ENCODE measurements at regions of chr2 and their contacts with region 1.

Region 1: DNA sequence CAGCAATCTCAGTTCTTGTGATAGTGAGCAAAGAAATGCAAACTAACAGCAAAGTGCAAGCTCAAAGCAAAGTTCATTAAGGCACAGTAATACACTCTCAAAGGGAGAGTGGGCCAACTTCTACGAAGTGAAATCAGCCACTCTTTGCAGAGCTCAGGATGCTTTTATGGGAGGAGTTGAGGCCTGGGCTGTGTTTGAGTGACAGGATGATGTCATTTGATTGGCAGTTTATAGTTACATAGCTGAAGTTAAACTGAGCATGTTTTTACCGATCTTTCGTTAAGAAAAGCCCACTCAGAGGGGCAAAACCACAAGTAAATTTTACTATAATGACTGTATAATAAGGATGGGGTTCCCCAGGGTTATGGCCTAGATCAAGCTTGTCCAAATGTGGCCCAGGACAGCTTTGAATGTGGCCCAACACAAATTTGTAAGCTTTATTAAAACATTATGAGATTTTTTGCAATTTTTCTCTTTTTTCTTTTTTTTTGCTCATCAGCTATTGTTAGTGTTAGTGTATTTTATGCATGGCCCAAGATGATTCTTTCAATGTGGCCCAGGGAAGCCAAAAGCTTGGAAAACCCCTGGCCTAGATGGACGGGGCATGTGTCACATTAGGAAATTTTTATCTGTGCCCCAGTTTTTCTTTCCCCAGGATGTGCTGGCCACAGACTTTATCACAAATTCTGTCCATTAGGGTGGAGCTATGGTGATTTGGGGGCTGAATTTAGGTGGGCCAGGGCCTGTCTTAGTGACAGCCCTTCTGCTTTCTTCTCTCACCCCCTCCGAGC is 8.3 kb upstream of the DNAH7 start:
- DNase-seq: peak; percentile 18
- ATAC-seq: peak; percentile 56
- H3K4me3 Mint-ChIP-seq: no peak overlapping the region
- H3K27ac Mint-ChIP-seq: no peak overlapping the region
- H3K4me1 Mint-ChIP-seq: peaks cover 29% of the 10 kb centered on the region
- H3K27me3 Mint-ChIP-seq: no peaks in the 10 kb centered on the region
- CTCF ChIP-seq: no peak

Region 2: GRCh38 chr2:196131384-196131937 is 54.5 kb after region 1 on chr2:
- CTCF ChIA-PET with region 1: interaction called, 10 read pairs
- POLR2A ChIA-PET with region 1: interaction called, 4 read pairs
- intact Hi-C with region 1: loop called (anchors 5 kb)
- DNase-seq: peak; percentile 83
- ATAC-seq: peak; percentile 51
- H3K4me3 Mint-ChIP-seq: no peak overlapping the region
- H3K27ac Mint-ChIP-seq: peak overlapping the region; percentile 79
- H3K4me1 Mint-ChIP-seq: peaks cover 13% of the 10 kb centered on the region
- H3K27me3 Mint-ChIP-seq: no peaks in the 10 kb centered on the region
- CTCF ChIP-seq: peak; percentile 72

Region 3: DNA sequence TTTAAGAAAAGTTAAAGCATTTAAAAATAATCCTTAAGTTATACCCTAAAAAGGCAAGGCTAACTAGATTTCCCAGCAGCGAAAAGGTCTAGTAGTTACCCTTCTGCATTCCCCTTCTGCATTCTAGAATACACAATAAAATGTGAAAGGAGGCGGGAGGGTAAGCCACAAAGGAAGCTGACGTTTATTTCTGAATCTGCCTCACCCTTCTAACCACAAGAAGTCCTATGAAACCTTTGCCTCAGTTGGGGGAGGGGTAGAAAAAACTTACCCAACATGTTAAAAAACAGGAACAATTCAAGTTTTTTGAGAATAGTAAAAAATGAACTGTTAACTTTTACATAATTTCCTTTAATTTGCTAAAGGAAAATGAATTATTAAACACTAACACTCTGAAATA is 83.1 kb after region 1 on chr2:
- CTCF ChIA-PET with region 1: interaction called, 11 read pairs
- POLR2A ChIA-PET with region 1: interaction called, 3 read pairs
- intact Hi-C with region 1: no loop called
- DNase-seq: peak; percentile 84
- ATAC-seq: peak; percentile 40
- H3K4me3 Mint-ChIP-seq: peak overlapping the region; percentile 99
- H3K27ac Mint-ChIP-seq: peak overlapping the region; percentile 83
- H3K4me1 Mint-ChIP-seq: peaks cover 49% of the 10 kb centered on the region
- H3K27me3 Mint-ChIP-seq: no peaks in the 10 kb centered on the region
- CTCF ChIP-seq: no peak

Region 4: DNA sequence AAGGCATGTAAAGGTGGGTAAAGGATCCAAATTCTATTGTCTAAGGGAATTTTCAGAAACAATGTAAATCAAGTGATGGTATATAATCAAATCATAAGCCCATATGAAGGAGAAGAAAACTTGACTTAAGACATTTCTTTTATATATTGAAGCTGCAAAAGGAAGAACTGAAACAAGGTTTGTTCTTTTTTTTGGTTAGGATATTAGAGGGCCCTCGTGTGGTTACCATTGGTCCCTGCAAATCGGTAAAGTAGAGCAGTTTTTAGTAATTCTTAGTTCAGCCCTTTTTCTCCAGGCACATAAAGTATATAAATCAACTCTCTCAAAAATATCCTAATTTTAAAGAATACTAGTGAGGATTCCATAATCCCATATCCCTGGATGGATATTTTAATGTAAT is 200.0 kb after region 1 on chr2:
- CTCF ChIA-PET with region 1: interaction called, 24 read pairs
- POLR2A ChIA-PET with region 1: no interaction called
- intact Hi-C with region 1: loop called (anchors 2 kb)
- DNase-seq: peak; percentile 60
- ATAC-seq: peak; percentile 18
- H3K4me3 Mint-ChIP-seq: no peak overlapping the region
- H3K27ac Mint-ChIP-seq: peak overlapping the region; percentile 93
- H3K4me1 Mint-ChIP-seq: peaks cover 54% of the 10 kb centered on the region
- H3K27me3 Mint-ChIP-seq: no peaks in the 10 kb centered on the region
- CTCF ChIP-seq: peak; percentile 72

Region 5: DNA sequence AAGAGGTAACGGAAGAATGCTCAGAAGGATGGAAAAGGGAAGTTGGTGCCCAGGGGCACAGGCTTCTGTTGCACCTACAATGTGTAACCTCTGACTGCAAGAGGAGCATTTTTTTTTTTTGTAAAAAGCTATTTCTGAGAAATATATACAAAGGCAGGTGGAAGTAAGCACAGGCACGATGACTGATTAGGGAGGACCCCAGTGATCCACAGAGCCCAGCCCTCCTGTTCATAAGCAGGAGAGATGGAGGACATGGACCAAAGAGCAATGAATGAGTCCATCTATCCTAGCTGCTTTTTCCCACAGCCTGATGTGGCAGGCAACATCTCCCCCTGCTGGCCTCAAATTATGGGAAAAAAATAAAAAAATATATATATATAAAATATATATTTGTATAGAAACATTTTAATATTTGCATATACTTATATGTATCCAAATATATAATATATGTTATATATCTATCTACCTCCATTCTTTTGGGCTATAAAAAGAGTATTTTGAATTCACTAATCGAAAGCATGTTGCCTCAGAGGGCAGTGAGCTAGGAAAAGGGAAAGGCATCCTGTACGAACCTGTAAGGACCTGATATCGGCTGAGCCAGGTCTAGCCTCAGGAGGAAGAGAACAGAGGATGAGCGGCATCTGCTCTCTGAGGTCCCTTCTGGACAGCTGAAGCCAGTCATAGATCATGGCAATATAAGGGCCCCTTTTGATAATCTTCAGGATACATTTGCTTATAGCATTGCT is 260.4 kb after region 1 on chr2:
- CTCF ChIA-PET with region 1: interaction called, 96 read pairs
- POLR2A ChIA-PET with region 1: no interaction called
- intact Hi-C with region 1: loop called (anchors 1 kb)
- DNase-seq: peak; percentile 16
- ATAC-seq: peak; percentile 24
- H3K4me3 Mint-ChIP-seq: no peak overlapping the region
- H3K27ac Mint-ChIP-seq: no peak overlapping the region
- H3K4me1 Mint-ChIP-seq: peaks cover 8% of the 10 kb centered on the region
- H3K27me3 Mint-ChIP-seq: no peaks in the 10 kb centered on the region
- CTCF ChIP-seq: peak; percentile 75